HEK293 (cell line): ENCODE measurements at regions of chr13 and their contacts with region 1.

Region 1: DNA sequence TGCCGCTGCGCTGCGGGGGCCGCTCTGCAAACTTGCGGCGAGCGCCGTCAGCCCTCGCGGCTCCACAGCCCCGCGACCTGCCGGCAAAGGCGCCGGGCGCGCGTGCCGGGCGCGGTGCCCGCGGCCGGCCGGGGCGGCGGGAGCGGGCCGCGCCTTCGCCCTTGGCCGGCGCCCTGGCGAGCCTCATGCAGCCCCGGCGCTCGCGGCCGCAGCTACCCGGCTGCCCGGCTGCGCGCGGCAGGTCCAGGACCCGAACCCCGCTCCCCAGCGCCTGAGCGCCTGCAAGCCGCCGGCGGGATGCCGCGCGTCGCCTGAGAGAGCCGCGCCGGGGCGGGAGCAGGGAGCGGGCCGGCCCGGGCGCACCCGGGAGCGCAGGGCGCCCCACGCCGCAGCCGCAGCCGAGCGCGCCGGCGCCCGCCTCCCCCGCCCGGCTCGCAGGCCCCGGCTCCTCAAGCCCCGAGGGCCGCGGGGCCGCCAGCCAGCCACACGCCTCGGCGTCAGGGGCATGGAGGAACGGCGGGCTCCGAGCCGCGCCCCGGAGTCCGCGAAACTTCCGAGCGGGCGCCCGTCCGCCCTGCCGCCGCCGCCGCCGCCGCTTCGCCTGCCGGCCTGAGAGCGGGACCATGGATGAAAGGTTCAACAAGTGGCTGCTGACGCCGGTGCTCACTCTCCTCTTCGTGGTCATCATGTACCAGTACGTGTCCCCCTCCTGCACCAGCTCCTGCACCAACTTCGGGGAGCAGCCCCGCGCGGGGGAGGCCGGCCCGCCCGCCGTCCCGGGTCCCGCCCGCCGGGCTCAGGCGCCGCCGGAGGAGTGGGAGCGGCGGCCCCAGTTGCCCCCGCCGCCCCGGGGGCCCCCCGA is 564 bp downstream of the HS6ST3 start:
- H3K4me3 ChIP-seq: peak overlapping the region; percentile 53
- H3K27ac ChIP-seq: peak overlapping the region; percentile 60; the same call in 1 of the 2 replicates
- H3K4me1 ChIP-seq: peaks cover 5% of the 10 kb centered on the region
- CTCF ChIP-seq: no peak

Region 2: DNA sequence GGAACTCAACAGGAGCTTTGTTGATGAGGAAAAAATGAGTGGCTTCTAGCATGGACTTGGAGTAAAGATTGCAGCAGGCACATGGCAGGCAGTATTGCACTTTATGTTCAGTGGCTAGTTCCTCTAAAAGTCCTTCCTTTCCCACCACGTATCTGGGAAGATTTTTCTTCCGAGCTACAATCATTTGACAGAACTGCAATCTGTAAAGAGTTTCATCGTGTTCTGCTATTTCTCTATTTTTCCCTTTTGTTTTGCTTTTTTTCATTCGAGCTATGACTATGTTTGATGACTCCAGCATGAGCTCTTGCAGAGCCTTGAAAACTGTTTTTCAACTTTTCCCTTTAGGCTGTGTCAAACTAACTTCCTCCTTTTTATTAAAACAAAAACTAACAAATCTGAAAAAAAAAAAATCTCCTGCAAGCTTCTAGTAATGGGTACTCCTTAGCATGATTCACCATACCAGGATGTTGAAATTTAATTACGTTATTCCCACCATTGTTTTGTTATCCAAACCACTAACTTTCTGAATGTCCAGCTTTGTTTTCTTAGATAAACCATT is 525.7 kb before region 1 on chr13:
- CTCF ChIA-PET with region 1: no interaction called
- POLR2A ChIA-PET with region 1: no interaction called
- H3K4me3 ChIP-seq: no peak overlapping the region
- H3K27ac ChIP-seq: no peak overlapping the region
- H3K4me1 ChIP-seq: no peaks in the 10 kb centered on the region
- CTCF ChIP-seq: no peak

Region 3: GRCh38 chr13:96053011-96053703 is 37.3 kb before region 1 on chr13 and contains the start of gene UGGT2:
- CTCF ChIA-PET with region 1: interaction called, 4 read pairs
- POLR2A ChIA-PET with region 1: interaction called, 14 read pairs
- H3K4me3 ChIP-seq: peak within 1 kb of the TSS; percentile 95
- H3K27ac ChIP-seq: peak within 1 kb of the TSS; percentile 63; the same call in 1 of the 2 replicates
- H3K4me1 ChIP-seq: no peaks in the 10 kb centered on the region
- CTCF ChIP-seq: no peak

Region 4: GRCh38 chr13:96294930-96295881 is 204.7 kb after region 1 on chr13:
- CTCF ChIA-PET with region 1: no interaction called
- POLR2A ChIA-PET with region 1: no interaction called
- H3K4me3 ChIP-seq: no peak overlapping the region
- H3K27ac ChIP-seq: no peak overlapping the region
- H3K4me1 ChIP-seq: no peaks in the 10 kb centered on the region
- CTCF ChIP-seq: no peak